Mammary epithelial cell (primary cell): ENCODE measurements at regions of chr14 and their contacts with region 1.

Region 1: DNA sequence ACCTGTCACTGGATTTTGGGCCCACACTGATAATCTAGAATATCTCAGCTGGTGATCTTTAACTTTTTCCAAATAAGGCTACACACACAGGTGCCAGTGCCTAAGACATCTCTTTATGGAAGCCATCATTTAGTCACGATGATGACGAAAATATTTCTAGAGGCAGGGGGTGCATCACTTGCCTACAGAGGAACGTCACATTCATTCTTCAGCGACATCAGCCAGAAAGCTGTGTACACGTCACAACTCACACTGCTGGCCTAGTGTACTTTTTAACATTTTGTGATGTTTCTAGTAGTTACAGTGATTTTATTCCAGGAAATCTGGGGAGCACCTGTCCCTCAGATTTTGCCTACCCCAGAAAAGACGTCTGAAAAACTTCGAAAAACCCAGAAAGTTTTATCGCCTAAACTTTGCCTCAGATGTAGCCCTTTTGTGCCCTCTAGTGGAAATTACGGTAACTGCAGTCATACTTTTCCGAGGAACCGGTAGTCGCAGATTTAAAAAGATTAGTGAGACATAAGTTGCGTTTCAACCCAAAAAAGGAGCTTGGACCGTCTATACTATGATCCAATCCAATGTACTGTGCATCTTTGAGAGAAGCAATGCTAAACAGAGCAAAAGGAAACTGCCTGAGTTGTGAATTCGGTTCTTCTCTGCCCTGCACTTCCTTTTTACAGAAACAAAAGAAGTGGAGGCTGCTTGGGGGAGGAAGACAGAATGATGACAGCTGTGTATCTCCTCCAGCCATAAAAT is 64.3 kb upstream of the STON2 start:
- DNase-seq: peak; percentile 45
- H3K4me3 ChIP-seq: peak overlapping the region; percentile 45 to 51 (median 47)
- H3K27ac ChIP-seq: no peak overlapping the region
- H3K4me1 ChIP-seq: peaks cover 4% of the 10 kb centered on the region
- H3K27me3 ChIP-seq: no peaks in the 10 kb centered on the region
- CTCF ChIP-seq: peak; percentile 81 to 95

Region 2: GRCh38 chr14:80954687-80955299 is 509.6 kb before region 1 on chr14:
- CTCF ChIA-PET with region 1: no interaction called
- dilution Hi-C with region 1: no loop called
- in situ Hi-C with region 1: no loop called
- intact Hi-C with region 1: loop called (anchors 1 kb)
- DNase-seq: peak; percentile 63
- H3K4me3 ChIP-seq: peak overlapping the region; percentile 36 to 58 (median 42)
- H3K27ac ChIP-seq: no peak overlapping the region
- H3K4me1 ChIP-seq: no peaks in the 10 kb centered on the region
- H3K27me3 ChIP-seq: peaks cover 2% of the 10 kb centered on the region
- CTCF ChIP-seq: peak; percentile 61 to 82

Region 3: DNA sequence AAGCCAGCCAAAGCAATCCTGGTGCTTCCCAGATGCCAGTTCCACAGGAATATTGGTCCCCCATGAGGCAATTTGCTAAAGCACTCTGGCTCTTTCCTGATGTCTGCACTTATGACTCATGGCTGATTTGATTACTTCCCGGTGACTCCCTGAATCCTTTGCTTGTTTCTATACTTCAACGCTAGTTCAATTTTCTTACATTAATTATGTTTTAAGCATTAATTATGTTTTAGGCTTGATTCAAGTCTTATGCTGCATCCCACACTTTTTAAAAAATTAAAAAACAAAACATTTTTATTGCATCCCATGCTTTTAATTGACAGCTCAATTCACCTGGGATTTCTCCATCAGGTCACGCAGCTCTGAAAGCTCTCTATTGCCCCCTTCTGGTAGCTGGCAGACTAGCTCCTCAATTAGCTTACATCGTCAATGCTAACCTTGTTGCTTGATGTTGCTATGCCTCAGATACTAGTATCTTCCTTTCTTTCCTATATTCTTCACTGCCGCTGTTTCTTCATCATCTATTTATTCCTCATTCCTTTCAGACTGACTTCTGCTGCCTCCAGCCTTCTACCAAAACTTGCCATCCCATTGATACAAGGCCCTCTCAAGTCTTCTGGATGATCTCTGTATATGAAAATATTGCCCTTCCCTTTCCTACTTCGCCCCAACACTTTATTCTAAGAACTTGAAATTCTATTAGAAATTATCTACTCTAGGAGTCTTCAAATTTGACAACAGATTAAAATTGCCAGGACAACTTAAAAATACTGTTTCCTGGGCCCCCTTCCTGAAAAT is 477.0 kb before region 1 on chr14:
- CTCF ChIA-PET with region 1: no interaction called
- dilution Hi-C with region 1: no loop called
- in situ Hi-C with region 1: loop called (anchors 25 kb)
- intact Hi-C with region 1: no loop called
- DNase-seq: peak; percentile 68
- H3K4me3 ChIP-seq: no peak overlapping the region
- H3K27ac ChIP-seq: no peak overlapping the region
- H3K4me1 ChIP-seq: no peaks in the 10 kb centered on the region
- H3K27me3 ChIP-seq: no peaks in the 10 kb centered on the region
- CTCF ChIP-seq: peak; percentile 92 to 98

Region 4: GRCh38 chr14:80996049-80996901 is 468.1 kb before region 1 on chr14:
- CTCF ChIA-PET with region 1: no interaction called
- dilution Hi-C with region 1: no loop called
- in situ Hi-C with region 1: loop called (anchors 25 kb)
- intact Hi-C with region 1: loop called (anchors 1 kb)
- DNase-seq: peak; percentile 81
- H3K4me3 ChIP-seq: no peak overlapping the region
- H3K27ac ChIP-seq: no peak overlapping the region
- H3K4me1 ChIP-seq: no peaks in the 10 kb centered on the region
- H3K27me3 ChIP-seq: peaks cover 5% of the 10 kb centered on the region
- CTCF ChIP-seq: peak; percentile 67 to 83

Region 5: DNA sequence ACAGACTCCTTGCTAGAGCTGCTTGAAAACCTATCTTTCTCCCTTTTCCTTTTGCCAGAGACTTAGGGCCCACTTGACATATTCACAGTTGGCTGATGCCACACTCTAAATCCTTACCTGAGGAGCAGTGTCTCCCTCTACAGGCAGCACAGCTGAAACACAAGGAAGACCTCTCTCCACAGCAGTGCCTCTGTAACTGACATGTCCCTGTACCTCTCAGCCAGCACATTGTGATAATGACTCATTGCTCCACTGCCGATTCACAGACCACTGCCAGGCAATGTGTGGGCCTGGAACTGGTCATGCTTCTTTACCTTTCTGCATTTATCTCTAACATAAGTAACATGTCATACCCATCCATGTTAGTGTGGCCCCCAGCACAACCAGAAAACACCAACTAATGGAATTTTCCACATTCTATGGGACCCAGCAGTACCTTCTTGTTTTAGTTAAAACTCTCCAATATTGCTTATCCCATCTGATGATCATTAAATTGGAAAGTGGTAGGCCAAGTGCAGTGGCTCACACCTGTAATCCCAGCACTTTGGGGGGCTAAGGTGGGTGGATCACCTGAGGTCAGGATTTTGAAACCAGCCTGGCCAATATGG is 300.2 kb before region 1 on chr14:
- CTCF ChIA-PET with region 1: no interaction called
- dilution Hi-C with region 1: no loop called
- in situ Hi-C with region 1: no loop called
- intact Hi-C with region 1: loop called (anchors 1 kb)
- DNase-seq: peak; percentile 85
- H3K4me3 ChIP-seq: no peak overlapping the region
- H3K27ac ChIP-seq: no peak overlapping the region
- H3K4me1 ChIP-seq: no peaks in the 10 kb centered on the region
- H3K27me3 ChIP-seq: no peaks in the 10 kb centered on the region
- CTCF ChIP-seq: peak; percentile 91 to 95

Region 6: DNA sequence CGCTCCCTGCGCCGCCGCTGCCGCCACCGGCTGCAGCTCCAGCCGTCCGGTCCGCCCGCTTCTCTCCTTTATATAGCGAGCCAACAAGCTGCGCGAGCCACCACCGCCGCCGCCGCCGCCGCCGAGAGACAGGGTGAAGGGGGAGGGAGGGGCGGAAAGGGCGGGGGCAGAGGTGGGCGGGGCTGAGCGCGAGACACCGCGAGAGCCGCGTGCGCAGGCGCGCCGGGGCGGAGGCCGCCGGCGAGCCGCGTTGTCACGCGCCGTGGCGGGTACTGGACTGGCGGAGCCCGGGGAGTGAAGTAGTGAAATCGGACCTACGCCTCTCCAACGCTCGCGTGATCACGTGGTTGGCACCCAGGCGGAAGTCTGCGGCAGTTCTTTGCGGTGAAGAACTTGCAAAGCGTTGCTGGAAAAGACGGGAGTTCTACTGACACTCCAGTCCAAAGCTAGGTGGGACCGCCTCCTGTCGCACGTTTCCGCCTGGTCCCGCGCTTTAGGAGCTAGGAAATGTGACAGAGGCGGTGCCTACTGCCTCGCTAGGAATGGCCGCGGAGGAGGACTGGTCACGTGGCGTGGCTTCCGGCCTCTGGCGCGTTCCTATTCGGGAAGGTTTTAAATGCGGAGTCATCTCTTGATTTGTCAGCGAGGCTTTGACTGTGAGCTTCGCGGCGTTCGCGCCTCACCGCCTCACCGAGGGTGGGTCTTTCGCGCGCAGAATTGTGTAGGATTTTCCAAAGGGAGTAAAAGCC is 243.4 kb before region 1 on chr14 and contains the start of gene GTF2A1:
- CTCF ChIA-PET with region 1: no interaction called
- dilution Hi-C with region 1: no loop called
- in situ Hi-C with region 1: no loop called
- intact Hi-C with region 1: loop called (anchors 5 kb)
- DNase-seq: peak; percentile 95
- H3K4me3 ChIP-seq: peak within 1 kb of the TSS; percentile 83 to 100 (median 92)
- H3K27ac ChIP-seq: peak within 1 kb of the TSS; percentile 97
- H3K4me1 ChIP-seq: peaks cover 10% of the 10 kb centered on the region
- H3K27me3 ChIP-seq: no peaks in the 10 kb centered on the region
- CTCF ChIP-seq: no peak
- total RNA-seq, gene GTF2A1: 26.3 to 30.9 TPM